Common myeloid progenitor, CD34-positive (primary cell): ENCODE measurements at regions of chr1 and their contacts with region 1.

Region 1: GRCh38 chr1:156421062-156421938 is 52.3 kb downstream of the RHBG start:
- DNase-seq: peak; percentile 57 to 78 (median 76)
- H3K4me3 ChIP-seq: peak overlapping the region in 4 of 7 experiments; percentile 17 to 46 (median 30)
- H3K27ac ChIP-seq: no peak overlapping the region
- H3K4me1 ChIP-seq: peaks cover 0 to 23% (median 18%) of the 10 kb centered on the region in 4 experiments
- H3K27me3 ChIP-seq: peaks cover 34 to 98% (median 55%) of the 10 kb centered on the region in 5 experiments

Region 2: GRCh38 chr1:156050416-156050815 is 370.9 kb before region 1 on chr1:
- CTCF ChIA-PET with region 1: no interaction called
- POLR2A ChIA-PET with region 1: no interaction called
- DNase-seq: no peak
- H3K4me3 ChIP-seq: no peak overlapping the region
- H3K27ac ChIP-seq: no peak overlapping the region
- H3K4me1 ChIP-seq: peaks cover 5 to 18% (median 11%) of the 10 kb centered on the region in 4 experiments
- H3K27me3 ChIP-seq: no peaks in the 10 kb centered on the region

Region 3: GRCh38 chr1:156435545-156436141 is 14.3 kb after region 1 on chr1:
- CTCF ChIA-PET with region 1: interaction called, 36 read pairs
- POLR2A ChIA-PET with region 1: no interaction called
- DNase-seq: peak in 2 of 3 donors; percentile 41 to 50
- H3K4me3 ChIP-seq: peak overlapping the region in 4 of 7 experiments; percentile 25 to 50 (median 40)
- H3K27ac ChIP-seq: no peak overlapping the region
- H3K4me1 ChIP-seq: peaks cover 0 to 23% (median 14%) of the 10 kb centered on the region in 4 experiments
- H3K27me3 ChIP-seq: peaks cover 36 to 100% (median 71%) of the 10 kb centered on the region in 5 experiments

Region 4: GRCh38 chr1:156476501-156477298 is 55.4 kb after region 1 on chr1:
- CTCF ChIA-PET with region 1: no interaction called
- POLR2A ChIA-PET with region 1: no interaction called
- DNase-seq: no peak
- H3K4me3 ChIP-seq: no peak overlapping the region
- H3K27ac ChIP-seq: no peak overlapping the region
- H3K4me1 ChIP-seq: peaks cover 0 to 18% (median 10%) of the 10 kb centered on the region in 4 experiments
- H3K27me3 ChIP-seq: no peaks in the 10 kb centered on the region

Region 5: GRCh38 chr1:156500797-156501499 is 79.6 kb after region 1 on chr1:
- CTCF ChIA-PET with region 1: no interaction called
- POLR2A ChIA-PET with region 1: no interaction called
- DNase-seq: peak; percentile 94 to 97 (median 97)
- H3K4me3 ChIP-seq: peak overlapping the region; percentile 77 to 97 (median 90)
- H3K27ac ChIP-seq: peak overlapping the region; percentile 95 to 97
- H3K4me1 ChIP-seq: peaks cover 28 to 82% (median 77%) of the 10 kb centered on the region in 4 experiments
- H3K27me3 ChIP-seq: no peaks in the 10 kb centered on the region

Region 6: GRCh38 chr1:156511644-156512043 is 90.3 kb after region 1 on chr1:
- CTCF ChIA-PET with region 1: no interaction called
- POLR2A ChIA-PET with region 1: no interaction called
- DNase-seq: no peak
- H3K4me3 ChIP-seq: no peak overlapping the region
- H3K27ac ChIP-seq: no peak overlapping the region
- H3K4me1 ChIP-seq: peaks cover 0 to 30% (median 16%) of the 10 kb centered on the region in 4 experiments
- H3K27me3 ChIP-seq: no peaks in the 10 kb centered on the region